ENCODE measurements at regions of chr10 and their contacts with region 1.

Region 1: DNA sequence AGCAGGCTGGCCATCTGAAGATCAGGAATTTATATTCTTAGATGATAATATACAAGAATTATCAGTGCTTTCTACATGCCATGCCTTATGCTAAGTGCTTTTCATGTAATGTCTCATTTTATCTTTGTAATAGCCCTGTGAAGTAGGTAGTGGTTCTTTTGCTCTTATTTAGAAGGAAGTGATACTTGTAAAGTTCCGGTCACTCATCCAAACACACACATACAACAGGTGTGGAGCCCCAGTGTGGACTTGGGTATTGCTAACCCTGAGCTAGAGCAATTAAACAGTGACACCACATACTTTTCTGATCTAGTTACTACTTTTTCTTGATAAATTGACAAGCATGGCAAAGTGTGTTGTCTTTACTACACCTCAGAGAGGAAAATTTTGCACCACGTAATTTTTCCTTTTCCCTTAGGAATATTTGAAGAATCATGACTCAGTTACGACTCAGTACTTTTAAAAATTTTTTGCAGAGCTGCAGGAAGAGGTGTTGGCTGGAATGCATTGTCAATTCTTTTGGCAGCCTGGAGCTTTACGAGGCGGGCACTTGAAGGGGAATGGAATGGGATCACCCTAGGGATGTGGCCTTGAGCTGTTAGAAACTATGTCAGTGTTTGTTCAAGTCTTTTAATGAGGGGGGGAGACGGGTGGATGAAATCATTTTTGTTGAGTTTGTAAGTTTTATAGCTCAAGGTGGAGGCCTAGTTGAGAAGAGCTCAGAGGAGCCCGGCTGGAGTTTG is 212.5 kb upstream of the CELF2 start:
- DNase-seq: no peak
- ATAC-seq: no peak

Region 2: DNA sequence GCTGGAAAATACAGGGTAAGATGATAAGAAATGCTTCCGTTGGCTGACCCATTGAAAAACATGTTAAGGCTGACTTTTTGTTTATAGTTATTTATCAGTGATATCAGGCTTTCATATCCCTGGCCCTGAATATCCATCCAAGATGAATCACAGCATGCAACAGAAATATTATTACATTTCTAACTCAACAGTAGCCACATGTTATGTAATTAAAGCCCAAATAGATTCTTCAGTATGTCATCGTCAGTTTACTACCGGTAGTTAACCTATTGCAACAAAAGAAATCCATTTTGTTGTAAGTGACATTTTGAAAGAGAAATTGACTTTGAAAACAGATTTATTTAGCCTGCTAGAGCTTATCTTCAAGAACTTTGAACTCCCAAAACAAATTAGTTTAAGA is 141.5 kb before region 1 on chr10:
- intact Hi-C with region 1: no loop called
- DNase-seq: no peak
- ATAC-seq: no peak

Region 3: DNA sequence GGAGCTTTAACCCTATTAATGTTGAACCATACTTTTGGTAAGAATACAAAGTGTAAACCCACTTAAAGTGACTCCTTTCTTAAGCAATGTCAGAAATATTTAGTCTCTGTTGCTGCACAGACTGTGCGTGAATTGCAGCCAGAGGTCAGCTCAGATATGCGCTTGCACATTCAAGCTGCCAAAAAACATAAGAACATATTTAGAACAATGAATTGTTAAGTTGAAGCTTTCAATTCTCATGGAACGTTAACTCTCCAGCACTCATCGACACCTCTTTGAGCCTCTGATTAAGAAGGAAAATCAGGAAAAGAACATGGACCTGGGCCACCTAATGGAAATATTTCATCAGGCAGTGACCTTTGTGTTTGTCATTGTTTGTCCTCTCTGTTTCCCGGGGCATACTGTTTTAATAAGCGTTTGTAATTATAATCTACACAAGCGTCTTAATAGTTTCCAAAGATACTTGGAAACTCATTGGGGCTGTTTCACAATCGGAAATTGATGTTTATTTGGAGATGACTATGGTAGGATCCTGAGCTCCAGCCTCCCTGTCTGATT is 19.5 kb after region 1 on chr10:
- intact Hi-C with region 1: loop called (anchors 2 kb)
- DNase-seq: peak; percentile 76
- ATAC-seq: peak; percentile 86

Region 4: DNA sequence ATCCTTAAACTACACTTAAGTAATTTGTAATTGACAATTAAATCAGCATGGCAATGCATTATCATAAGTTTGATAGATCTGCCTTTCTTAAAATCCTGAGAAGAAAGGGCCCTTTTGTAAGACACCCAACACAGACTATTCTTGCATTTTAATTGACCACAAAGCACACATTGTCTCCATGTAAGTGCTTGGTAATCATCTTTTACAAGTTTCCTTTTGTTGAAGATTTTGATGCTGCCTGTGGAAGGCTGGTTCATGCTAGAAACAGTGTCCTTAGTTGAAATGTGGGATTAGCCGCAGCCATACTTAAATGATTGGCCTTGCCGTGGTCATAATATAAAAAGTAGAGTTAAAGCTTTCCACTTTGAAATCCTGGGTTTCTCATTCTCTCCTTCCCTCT is 180.2 kb after region 1 on chr10:
- intact Hi-C with region 1: no loop called
- DNase-seq: no peak
- ATAC-seq: no peak

Region 5: DNA sequence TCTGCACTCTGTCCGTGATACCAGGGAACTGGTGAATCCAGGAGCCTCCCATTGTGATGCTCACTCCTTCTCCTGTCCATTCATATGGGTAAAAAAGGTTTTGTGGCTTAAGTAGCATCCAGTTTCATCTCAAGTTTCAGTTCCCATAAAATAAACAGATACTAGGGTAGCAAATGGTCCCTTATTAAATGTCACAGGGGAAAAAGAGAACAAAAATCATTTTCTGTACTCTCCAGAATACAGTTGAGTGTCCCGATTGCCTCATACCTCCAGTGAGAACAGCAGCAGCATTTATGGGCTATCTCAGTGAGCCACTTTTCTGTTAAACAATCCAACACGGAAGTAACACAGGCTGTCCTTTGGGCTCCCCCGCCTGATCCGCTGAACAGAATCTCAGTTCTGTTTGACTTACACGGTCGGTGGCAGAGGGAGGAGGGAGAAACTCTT is 392.1 kb after region 1 on chr10:
- intact Hi-C with region 1: loop called (anchors 10 kb)
- DNase-seq: no peak
- ATAC-seq: peak; percentile 91